ENCODE measurements at regions of chr11 and their contacts with region 1.

Region 1: DNA sequence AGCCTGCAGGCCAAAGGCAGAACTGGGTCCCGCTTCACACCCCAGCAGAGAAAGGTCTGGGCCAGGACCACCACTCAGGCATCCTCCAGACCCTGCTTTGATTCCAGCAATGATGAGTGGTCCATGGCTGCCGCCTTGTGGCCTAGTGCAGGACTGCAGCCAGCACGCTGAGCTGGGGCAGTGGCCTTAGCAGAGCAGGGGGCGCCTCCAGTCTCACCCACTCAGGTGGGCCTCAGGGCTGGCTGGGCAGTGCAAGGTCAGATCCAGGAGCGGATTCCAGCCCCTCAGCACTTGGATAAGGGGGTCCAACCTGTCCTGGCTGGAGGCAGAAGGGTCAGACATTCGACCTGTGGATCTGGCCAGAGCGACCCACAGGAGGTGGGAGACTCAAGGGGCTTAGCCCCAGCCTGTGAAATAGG is 9.6 kb upstream of the PDE2A start:
- DNase-seq: peak; percentile 92
- ATAC-seq: peak; percentile 80
- H3K4me3 Mint-ChIP-seq: no peak overlapping the region
- H3K27ac Mint-ChIP-seq: no peak overlapping the region
- H3K4me1 Mint-ChIP-seq: peaks cover 9% of the 10 kb centered on the region
- H3K27me3 Mint-ChIP-seq: peaks cover 23% of the 10 kb centered on the region
- CTCF ChIP-seq: peak; percentile 96

Region 2: GRCh38 chr11:72579816-72580641 is 103.8 kb before region 1 on chr11:
- CTCF ChIA-PET with region 1: interaction called, 461 read pairs
- POLR2A ChIA-PET with region 1: interaction called, 3 read pairs
- DNase-seq: peak; percentile 4
- ATAC-seq: no peak
- H3K4me3 Mint-ChIP-seq: no peak overlapping the region
- H3K27ac Mint-ChIP-seq: no peak overlapping the region
- H3K4me1 Mint-ChIP-seq: peaks cover 8% of the 10 kb centered on the region
- H3K27me3 Mint-ChIP-seq: peaks cover 36% of the 10 kb centered on the region
- CTCF ChIP-seq: no peak

Region 3: DNA sequence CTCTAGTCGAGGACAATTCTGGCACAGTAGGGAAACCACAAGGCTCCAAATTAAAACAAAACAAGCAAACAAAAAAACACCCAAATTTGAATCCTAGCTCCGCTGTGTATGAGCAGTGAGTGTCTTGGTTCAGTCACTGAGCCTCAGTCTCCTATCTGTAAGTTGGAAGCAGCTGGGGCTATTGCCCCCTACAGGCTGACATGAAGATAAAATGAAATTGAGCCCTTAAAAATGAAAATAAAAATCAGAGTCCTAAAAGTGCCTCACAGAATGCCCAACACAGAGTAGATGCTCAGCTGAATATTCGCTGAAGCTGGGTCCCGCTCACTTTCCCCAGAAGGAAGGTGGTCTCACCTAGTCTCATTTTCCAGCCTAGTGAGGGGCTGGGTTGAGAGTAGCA is 74.7 kb before region 1 on chr11:
- CTCF ChIA-PET with region 1: interaction called, 17 read pairs
- POLR2A ChIA-PET with region 1: no interaction called
- DNase-seq: no peak
- ATAC-seq: peak; percentile 47
- H3K4me3 Mint-ChIP-seq: no peak overlapping the region
- H3K27ac Mint-ChIP-seq: no peak overlapping the region
- H3K4me1 Mint-ChIP-seq: no peaks in the 10 kb centered on the region
- H3K27me3 Mint-ChIP-seq: peaks cover 3% of the 10 kb centered on the region
- CTCF ChIP-seq: no peak

Region 4: DNA sequence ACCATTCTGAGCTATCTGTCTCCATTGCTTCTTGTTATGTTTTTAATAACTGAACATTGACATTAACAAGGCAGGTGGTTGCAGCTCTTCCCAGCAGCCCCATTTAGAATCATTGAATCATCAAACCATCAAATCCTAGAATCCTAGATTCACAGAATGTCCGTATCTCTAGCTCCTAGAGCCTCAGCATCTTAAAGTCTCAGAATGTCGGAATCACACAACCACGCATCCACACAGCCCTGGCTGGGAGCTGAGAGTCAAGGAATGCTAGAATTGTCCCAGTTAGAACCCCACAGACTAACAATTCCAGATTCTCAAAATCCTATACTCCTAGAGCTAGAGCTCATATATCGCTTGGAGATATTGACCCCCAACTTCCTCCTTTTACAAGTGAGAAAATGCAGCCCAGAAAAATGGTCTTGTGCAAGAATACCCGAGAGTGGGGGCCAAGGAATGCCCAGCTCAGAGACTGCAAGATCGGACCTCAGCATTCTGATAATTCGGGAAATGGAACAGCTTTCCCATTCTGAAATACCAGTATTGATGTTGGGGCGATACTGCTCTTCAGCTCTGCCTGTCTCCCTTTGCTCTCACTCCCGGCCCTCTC is 48.4 kb before region 1 on chr11:
- CTCF ChIA-PET with region 1: interaction called, 26 read pairs
- POLR2A ChIA-PET with region 1: no interaction called
- DNase-seq: no peak
- ATAC-seq: no peak
- H3K4me3 Mint-ChIP-seq: no peak overlapping the region
- H3K27ac Mint-ChIP-seq: no peak overlapping the region
- H3K4me1 Mint-ChIP-seq: peaks cover 38% of the 10 kb centered on the region
- H3K27me3 Mint-ChIP-seq: peaks cover 5% of the 10 kb centered on the region
- CTCF ChIP-seq: no peak

Region 5: DNA sequence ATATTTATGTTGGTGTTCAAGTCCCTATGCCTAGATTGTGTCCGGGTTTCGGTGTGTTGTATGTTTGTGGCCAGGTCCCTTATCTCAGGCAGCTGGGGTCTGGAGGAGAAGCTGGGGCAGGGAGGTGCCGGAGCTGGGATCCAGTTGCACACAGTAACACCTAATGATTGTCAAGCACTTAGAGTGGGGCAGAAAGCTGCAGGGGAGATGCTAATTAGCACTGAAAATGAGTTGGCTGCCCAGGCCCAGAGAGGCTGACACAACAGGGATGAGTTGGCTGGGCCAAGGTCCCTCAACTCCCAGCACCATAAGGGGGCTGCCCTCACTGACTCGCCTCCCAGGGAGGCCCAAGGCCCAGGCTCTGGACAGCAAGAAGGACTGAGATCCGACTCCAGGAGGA is 21.8 kb before region 1 on chr11:
- CTCF ChIA-PET with region 1: interaction called, 52 read pairs
- POLR2A ChIA-PET with region 1: no interaction called
- DNase-seq: no peak
- ATAC-seq: no peak
- H3K4me3 Mint-ChIP-seq: no peak overlapping the region
- H3K27ac Mint-ChIP-seq: no peak overlapping the region
- H3K4me1 Mint-ChIP-seq: peaks cover 11% of the 10 kb centered on the region
- H3K27me3 Mint-ChIP-seq: peaks cover 16% of the 10 kb centered on the region; the same call in 1 of the 2 replicates
- CTCF ChIP-seq: no peak

Region 6: GRCh38 chr11:72703267-72704008 is 19.6 kb after region 1 on chr11:
- CTCF ChIA-PET with region 1: interaction called, 53 read pairs
- POLR2A ChIA-PET with region 1: no interaction called
- DNase-seq: no peak
- ATAC-seq: no peak
- H3K4me3 Mint-ChIP-seq: no peak overlapping the region
- H3K27ac Mint-ChIP-seq: no peak overlapping the region
- H3K4me1 Mint-ChIP-seq: peaks cover 42% of the 10 kb centered on the region
- H3K27me3 Mint-ChIP-seq: no peaks in the 10 kb centered on the region
- CTCF ChIP-seq: no peak

Region 7: DNA sequence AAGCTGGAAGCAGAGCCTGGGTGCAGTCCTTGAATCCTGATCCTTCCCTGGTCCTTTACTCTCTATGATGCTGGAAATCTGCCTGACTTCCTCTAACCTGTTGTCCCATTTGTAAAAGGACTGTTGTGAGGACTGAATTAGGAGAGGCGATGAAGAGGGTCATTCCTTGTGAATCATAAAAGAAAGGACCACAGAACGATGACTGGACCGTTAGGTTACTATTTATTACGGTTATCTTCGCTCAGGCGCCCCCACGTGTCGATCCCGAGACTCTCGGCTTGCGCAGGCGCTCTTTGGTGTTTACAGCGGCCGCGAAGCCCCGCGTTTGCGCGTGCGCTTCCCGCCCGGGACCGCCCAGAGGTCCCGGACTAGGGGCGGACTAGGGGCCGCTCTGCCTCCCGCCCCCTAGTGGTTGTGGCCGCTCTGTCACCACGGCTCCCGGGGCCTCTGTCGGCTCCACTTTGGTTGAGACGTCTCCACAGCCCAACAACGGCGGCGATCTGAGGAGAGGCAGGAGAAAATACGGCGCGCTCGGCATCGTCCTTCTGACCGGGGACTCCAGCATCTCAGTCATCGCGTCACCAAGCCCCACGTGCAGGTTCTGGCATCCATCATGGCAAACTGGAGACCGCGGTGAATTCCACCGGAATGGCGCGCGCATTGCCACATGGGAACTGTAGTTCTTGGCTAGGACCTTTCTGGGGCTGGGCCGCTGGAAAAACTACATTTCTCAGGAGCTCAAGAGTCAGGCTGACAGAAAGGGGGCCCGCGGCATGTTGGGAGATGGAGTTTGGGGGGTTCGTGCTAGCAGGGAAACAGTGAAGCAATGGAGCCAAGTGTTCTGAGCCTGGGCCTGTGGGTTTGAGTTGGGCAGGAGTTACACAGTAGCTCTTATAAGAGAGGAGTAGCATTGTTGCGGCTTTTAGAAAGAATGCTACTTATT is 109.9 kb after region 1 on chr11 and contains the start of gene STARD10:
- CTCF ChIA-PET with region 1: interaction called, 13 read pairs
- POLR2A ChIA-PET with region 1: no interaction called
- DNase-seq: peak; percentile 95
- ATAC-seq: peak; percentile 86
- H3K4me3 Mint-ChIP-seq: peak within 1 kb of the TSS; percentile 98
- H3K27ac Mint-ChIP-seq: peak within 1 kb of the TSS; percentile 98
- H3K4me1 Mint-ChIP-seq: peaks cover 25% of the 10 kb centered on the region
- H3K27me3 Mint-ChIP-seq: no peaks in the 10 kb centered on the region
- CTCF ChIP-seq: peak; percentile 92
- total RNA-seq, gene STARD10: 32.0 to 40.9 TPM (median 36.6 TPM) in 3 replicates

Measured in WTC11 (cell line).